PC-3 (cell line): ENCODE measurements at regions of chr15 and their contacts with region 1.

Region 1: DNA sequence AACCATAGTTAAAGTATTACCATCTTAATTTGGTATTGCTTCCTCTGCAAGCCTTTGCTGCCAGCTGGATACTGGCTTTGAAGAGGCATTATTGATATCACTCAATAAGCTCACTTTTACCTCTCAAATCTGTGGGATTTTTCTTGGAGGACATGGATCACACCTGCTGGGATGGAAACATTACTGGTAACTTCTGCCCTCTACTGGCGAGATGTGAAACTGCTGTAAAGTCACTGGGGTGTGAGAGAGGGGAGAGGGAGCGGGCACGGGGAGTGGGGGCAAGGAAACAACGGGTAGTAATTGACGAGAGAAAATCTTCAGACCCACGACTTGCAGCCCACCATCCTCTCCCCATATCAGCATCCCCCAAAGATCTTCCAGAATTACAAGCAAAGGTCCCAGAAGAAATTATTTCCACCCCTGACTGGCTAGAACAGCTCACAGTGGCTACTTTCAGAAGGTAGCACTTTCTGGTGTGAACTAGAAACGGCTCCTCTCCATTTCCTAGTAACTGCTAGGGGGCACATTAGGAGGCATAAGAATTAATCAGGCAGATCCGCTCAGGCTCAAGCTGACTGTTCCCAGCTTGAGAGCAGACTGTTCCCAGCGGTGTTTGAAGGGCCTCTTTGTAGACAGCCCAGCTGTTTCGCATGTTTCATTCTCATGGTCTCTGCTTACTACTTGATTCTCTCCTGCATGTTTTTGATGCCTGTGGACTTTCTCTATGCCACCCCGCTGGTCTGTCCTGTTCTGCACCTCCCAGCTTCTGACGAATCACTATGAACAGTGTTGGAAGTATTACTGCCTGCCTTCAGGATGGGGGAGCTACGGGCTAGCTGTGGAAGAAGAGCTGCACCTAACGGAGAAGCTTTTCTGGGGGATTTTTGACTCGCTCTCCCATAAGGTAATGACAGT is 230.4 kb upstream of the CHRM5 start:
- DNase-seq: peak; percentile 74
- ATAC-seq: peak; percentile 87
- H3K4me3 ChIP-seq: no peak overlapping the region
- H3K27ac ChIP-seq: no peak overlapping the region
- H3K4me1 ChIP-seq: no peaks in the 10 kb centered on the region
- H3K27me3 ChIP-seq: peaks cover 15% of the 10 kb centered on the region
- CTCF ChIP-seq: peak; percentile 87

Region 2: GRCh38 chr15:33722005-33722672 is 15.8 kb before region 1 on chr15:
- CTCF ChIA-PET with region 1: no interaction called
- POLR2A ChIA-PET with region 1: interaction called, 10 read pairs
- intact Hi-C with region 1: no loop called
- DNase-seq: peak; percentile 63
- ATAC-seq: peak; percentile 39; the same call in 1 of the 2 replicates
- H3K4me3 ChIP-seq: no peak overlapping the region
- H3K27ac ChIP-seq: peak overlapping the region; percentile 70
- H3K4me1 ChIP-seq: peaks cover 22% of the 10 kb centered on the region
- H3K27me3 ChIP-seq: no peaks in the 10 kb centered on the region
- CTCF ChIP-seq: no peak

Region 3: GRCh38 chr15:33756961-33757360 is 19.0 kb after region 1 on chr15:
- CTCF ChIA-PET with region 1: no interaction called
- POLR2A ChIA-PET with region 1: no interaction called
- intact Hi-C with region 1: no loop called
- DNase-seq: no peak
- ATAC-seq: no peak
- H3K4me3 ChIP-seq: no peak overlapping the region
- H3K27ac ChIP-seq: no peak overlapping the region
- H3K4me1 ChIP-seq: no peaks in the 10 kb centered on the region
- H3K27me3 ChIP-seq: peaks cover 45% of the 10 kb centered on the region
- CTCF ChIP-seq: no peak

Region 4: GRCh38 chr15:33963831-33964664 is 226.1 kb after region 1 on chr15:
- CTCF ChIA-PET with region 1: interaction called, 4 read pairs
- POLR2A ChIA-PET with region 1: no interaction called
- intact Hi-C with region 1: loop called (anchors 1 kb)
- DNase-seq: peak; percentile 68
- ATAC-seq: peak; percentile 80
- H3K4me3 ChIP-seq: no peak overlapping the region
- H3K27ac ChIP-seq: no peak overlapping the region
- H3K4me1 ChIP-seq: peaks cover 17% of the 10 kb centered on the region
- H3K27me3 ChIP-seq: no peaks in the 10 kb centered on the region
- CTCF ChIP-seq: peak; percentile 93

Region 5: DNA sequence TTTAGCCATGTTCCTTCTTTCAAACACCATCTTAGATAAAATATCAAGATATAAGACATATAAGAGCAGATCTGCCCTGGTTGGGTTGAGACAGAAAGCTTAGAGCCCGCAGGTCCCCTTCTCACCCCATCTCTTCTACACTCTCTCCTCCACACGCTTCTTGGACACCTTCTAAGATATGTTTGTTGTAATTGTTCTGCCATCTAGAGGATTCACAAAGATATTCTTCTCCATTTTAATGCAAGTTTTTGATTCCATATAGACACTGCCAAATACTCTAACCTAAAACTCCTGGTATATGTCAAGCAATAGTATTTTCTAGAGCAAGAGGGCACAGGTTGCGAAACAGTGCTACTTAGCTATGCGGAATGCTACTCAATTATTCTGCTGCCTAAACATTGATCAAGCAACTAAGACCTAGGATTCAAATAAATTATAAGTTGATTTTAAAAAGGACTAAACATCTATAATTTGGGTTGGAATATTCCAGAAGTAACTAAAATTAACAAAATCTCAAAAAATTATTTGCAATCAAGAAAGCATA is 237.2 kb after region 1 on chr15:
- CTCF ChIA-PET with region 1: no interaction called
- POLR2A ChIA-PET with region 1: no interaction called
- intact Hi-C with region 1: loop called (anchors 1 kb)
- DNase-seq: peak; percentile 37
- ATAC-seq: peak; percentile 57; the same call in 1 of the 2 replicates
- H3K4me3 ChIP-seq: no peak overlapping the region
- H3K27ac ChIP-seq: no peak overlapping the region
- H3K4me1 ChIP-seq: no peaks in the 10 kb centered on the region
- H3K27me3 ChIP-seq: no peaks in the 10 kb centered on the region
- CTCF ChIP-seq: peak; percentile 43; the same call in 1 of the 2 replicates

Region 6: DNA sequence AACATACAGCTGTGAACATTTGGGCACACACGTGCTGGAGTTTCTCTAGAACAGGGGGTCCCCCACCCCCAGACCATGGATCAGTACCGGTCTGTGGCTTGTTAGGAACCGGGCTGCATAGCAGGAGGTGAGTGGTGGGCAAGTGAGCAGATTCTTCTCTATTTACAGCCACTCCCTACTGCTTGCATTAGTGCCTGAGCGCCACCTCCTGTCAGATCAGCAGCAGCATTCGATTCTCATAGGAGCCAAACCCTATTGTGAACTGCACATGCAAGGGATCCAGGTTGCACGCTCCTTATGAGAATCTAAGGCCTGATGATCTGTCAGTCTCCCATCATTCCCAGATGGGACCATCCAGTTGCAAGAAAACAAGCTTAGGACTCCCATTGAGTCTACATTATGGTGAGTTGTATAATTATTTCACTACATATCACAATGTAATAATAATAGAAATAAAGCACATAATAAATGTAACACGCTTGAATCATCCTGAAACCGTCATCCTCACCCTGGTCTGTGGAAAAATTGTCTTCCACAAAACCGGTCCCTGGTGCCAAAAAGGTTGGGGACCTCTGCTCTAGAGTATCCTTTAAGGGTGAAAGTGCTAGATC is 256.2 kb after region 1 on chr15:
- CTCF ChIA-PET with region 1: interaction called, 3 read pairs
- POLR2A ChIA-PET with region 1: no interaction called
- intact Hi-C with region 1: loop called (anchors 1 kb)
- DNase-seq: peak; percentile 68
- ATAC-seq: peak; percentile 98
- H3K4me3 ChIP-seq: no peak overlapping the region
- H3K27ac ChIP-seq: no peak overlapping the region
- H3K4me1 ChIP-seq: no peaks in the 10 kb centered on the region
- H3K27me3 ChIP-seq: no peaks in the 10 kb centered on the region
- CTCF ChIP-seq: peak; percentile 80